ENCODE measurements at regions of chr3 and their contacts with region 1.

Region 1: GRCh38 chr3:197711973-197712707 is 24.6 kb downstream of the RUBCN start:
- DNase-seq: peak; percentile 67
- ATAC-seq: peak; percentile 93
- H3K4me3 Mint-ChIP-seq: peak overlapping the region; percentile 79
- H3K27ac Mint-ChIP-seq: peak overlapping the region; percentile 95
- H3K4me1 Mint-ChIP-seq: peaks cover 76% of the 10 kb centered on the region
- H3K27me3 Mint-ChIP-seq: no peaks in the 10 kb centered on the region
- CTCF ChIP-seq: no peak

Region 2: DNA sequence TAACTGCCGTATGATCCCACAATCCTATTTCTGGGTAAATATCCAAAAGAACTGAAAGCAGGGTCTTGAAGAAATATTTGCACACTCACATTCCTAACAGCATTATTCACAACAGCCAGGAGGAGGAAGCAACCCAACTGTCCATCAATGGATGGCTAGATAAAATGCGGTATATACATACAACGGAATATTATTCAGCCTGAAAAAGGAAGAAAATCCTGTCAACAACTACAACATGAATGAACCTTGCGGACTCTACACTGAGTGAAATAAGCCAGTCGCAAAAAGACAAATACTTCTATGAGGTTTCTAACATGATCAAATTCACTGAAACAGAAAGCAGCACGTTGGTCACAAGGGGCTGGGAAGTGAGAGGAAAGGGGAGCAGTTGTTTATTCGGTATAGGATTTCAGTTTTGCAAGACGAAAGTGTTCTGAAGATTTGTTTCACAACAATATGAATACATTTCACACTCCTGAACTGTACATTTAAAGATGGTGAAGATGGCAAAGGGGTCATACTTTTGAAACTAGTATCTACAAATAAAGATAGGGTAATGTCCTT is 420.0 kb before region 1 on chr3:
- CTCF ChIA-PET with region 1: no interaction called
- POLR2A ChIA-PET with region 1: interaction called, 12 read pairs
- intact Hi-C with region 1: no loop called
- DNase-seq: no peak
- ATAC-seq: no peak
- H3K4me3 Mint-ChIP-seq: no peak overlapping the region
- H3K27ac Mint-ChIP-seq: no peak overlapping the region
- H3K4me1 Mint-ChIP-seq: peaks cover 24% of the 10 kb centered on the region
- H3K27me3 Mint-ChIP-seq: no peaks in the 10 kb centered on the region
- CTCF ChIP-seq: no peak

Region 3: GRCh38 chr3:197692641-197693040 is 19.5 kb before region 1 on chr3:
- CTCF ChIA-PET with region 1: no interaction called
- POLR2A ChIA-PET with region 1: interaction called, 3 read pairs
- intact Hi-C with region 1: loop called (anchors 2 kb)
- DNase-seq: no peak
- ATAC-seq: no peak
- H3K4me3 Mint-ChIP-seq: no peak overlapping the region
- H3K27ac Mint-ChIP-seq: no peak overlapping the region
- H3K4me1 Mint-ChIP-seq: peaks cover 1% of the 10 kb centered on the region
- H3K27me3 Mint-ChIP-seq: no peaks in the 10 kb centered on the region
- CTCF ChIP-seq: no peak

Region 4: DNA sequence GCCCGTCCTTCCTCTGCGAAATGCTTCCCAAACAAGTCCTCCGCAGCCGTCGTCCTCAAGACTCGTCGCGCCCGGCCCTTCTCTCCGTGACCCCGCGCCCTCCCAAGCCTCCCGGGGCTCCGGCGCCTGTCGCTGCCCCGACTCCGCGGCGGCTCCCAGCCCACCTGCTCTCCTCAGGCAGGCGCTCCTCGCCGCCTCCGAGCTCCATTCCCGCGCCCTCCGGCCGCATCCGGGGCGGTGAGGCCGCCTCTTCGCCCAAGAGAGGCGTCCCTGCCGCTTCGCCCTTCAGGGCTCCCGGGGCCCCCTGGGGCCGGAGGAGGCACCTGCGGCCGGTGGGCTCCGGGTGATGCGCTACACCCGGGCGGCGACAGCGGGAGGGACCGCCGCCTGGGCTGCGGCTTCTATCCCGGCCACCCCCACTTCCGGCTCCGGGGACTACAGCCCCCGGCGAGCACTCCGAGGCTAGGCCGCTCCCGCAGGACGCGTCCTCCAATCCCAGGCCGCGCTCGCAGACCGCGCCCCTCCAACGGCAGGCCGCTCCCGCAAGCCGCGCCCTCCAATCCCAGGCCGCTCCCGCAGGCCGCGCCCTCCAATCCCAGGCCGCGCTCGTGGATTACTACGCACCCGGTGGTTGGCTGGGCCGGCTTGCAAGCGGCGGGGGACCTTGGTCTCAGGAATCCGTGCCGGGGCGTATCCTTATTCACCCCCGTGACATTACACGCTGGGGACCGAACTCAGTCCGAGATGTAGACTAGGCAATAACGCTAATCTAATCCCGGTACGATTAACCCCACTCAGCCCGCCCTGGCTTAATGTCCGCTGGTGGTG is 24.6 kb after region 1 on chr3 and contains the start of gene RUBCN:
- CTCF ChIA-PET with region 1: interaction called, 5 read pairs
- POLR2A ChIA-PET with region 1: interaction called, 171 read pairs
- intact Hi-C with region 1: loop called (anchors 1 kb)
- DNase-seq: peak; percentile 88
- ATAC-seq: peak; percentile 87
- H3K4me3 Mint-ChIP-seq: peak within 1 kb of the TSS; percentile 94
- H3K27ac Mint-ChIP-seq: peak within 1 kb of the TSS; percentile 98
- H3K4me1 Mint-ChIP-seq: peaks cover 58% of the 10 kb centered on the region
- H3K27me3 Mint-ChIP-seq: no peaks in the 10 kb centered on the region
- CTCF ChIP-seq: no peak
- total RNA-seq, gene RUBCN: 196 and 217 TPM in 2 replicates

Region 5: DNA sequence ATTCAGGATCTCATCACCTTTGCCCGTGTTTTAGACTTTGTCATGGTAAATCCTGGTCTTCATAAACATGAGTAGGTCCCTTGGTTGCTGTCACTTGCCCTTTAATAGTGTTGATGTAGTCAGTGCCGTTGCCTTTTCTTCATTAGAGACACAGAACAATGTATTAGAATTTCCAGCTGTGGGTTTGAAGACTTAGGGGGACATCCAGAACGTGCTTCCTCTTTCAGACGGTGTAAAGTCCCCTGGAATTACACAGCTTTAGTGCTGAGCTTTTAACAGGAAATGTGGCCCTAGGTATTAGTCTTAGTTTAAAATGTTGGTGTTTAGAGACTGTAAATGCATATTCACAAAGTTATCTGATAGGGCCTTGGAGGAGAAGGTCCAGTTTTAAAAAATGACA is 70.1 kb after region 1 on chr3:
- CTCF ChIA-PET with region 1: no interaction called
- POLR2A ChIA-PET with region 1: interaction called, 8 read pairs
- intact Hi-C with region 1: loop called (anchors 1 kb)
- DNase-seq: no peak
- ATAC-seq: peak; percentile 91
- H3K4me3 Mint-ChIP-seq: peak overlapping the region; percentile 60
- H3K27ac Mint-ChIP-seq: peak overlapping the region; percentile 80
- H3K4me1 Mint-ChIP-seq: peaks cover 41% of the 10 kb centered on the region
- H3K27me3 Mint-ChIP-seq: no peaks in the 10 kb centered on the region
- CTCF ChIP-seq: no peak